BJ (cell line): ENCODE measurements at regions of chr2 and their contacts with region 1.

Region 1: DNA sequence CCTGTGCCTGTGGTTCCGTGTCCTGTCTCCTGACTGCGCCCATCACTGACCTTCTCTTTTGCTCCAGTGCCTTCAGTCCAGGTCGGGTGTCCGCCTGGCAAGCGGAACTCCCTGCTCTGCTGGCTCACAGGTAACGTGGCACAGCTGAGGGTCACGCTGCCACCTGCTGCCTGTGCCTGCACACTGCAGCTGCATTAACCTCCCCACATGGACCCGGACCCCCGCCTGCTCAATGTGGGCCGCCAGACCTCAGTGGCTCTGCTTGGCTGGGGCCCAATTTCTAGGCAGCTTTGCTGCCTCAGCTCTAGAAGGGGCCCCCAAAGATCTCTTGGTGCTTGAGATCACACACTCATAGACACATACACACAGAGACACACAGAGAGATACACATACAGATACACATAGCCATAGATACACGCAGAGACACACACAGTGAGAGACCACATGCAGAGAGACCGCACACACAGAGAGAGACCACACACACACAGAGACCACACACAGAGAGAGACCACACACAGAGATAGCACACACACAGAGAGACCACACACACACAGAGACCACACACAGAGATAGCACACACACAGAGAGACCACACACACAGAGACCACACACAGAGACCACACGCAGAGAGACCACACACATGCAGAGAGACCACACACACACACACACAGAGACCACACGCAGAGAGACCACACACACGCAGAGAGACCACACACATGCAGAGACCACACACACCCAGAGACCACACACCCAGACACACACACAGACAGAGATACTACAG is 14.9 kb upstream of the CNNM3 start:
- DNase-seq: no peak
- H3K4me3 ChIP-seq: no peak overlapping the region
- H3K27me3 ChIP-seq: no peaks in the 10 kb centered on the region
- CTCF ChIP-seq: peak; percentile 86

Region 2: DNA sequence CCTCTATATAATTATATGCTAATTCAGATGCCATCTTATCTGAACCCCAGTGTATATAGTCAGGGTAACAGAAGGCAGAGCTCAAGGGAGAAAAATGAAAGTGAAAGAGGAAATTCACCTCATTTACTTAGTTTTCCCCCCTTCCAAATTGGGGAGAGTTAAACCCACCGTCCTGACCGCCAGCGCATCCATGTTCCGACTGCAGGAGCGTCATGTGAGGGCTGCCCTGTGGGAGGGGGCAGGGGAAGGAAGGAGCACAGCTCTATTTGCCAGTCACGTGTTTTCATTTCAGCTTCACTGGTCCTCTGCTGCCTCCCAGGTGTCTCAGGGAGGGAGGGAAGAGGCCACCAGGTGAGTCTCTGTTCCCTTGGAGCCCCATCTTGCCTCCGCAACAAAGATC is 27.3 kb before region 1 on chr2:
- CTCF ChIA-PET with region 1: interaction called, 10 read pairs
- POLR2A ChIA-PET with region 1: no interaction called
- DNase-seq: no peak
- H3K4me3 ChIP-seq: no peak overlapping the region
- H3K27me3 ChIP-seq: no peaks in the 10 kb centered on the region
- CTCF ChIP-seq: no peak

Region 3: GRCh38 chr2:96783388-96783787 is 17.8 kb before region 1 on chr2:
- CTCF ChIA-PET with region 1: interaction called, 22 read pairs
- POLR2A ChIA-PET with region 1: no interaction called
- DNase-seq: no peak
- H3K4me3 ChIP-seq: no peak overlapping the region
- H3K27me3 ChIP-seq: no peaks in the 10 kb centered on the region
- CTCF ChIP-seq: no peak

Region 4: DNA sequence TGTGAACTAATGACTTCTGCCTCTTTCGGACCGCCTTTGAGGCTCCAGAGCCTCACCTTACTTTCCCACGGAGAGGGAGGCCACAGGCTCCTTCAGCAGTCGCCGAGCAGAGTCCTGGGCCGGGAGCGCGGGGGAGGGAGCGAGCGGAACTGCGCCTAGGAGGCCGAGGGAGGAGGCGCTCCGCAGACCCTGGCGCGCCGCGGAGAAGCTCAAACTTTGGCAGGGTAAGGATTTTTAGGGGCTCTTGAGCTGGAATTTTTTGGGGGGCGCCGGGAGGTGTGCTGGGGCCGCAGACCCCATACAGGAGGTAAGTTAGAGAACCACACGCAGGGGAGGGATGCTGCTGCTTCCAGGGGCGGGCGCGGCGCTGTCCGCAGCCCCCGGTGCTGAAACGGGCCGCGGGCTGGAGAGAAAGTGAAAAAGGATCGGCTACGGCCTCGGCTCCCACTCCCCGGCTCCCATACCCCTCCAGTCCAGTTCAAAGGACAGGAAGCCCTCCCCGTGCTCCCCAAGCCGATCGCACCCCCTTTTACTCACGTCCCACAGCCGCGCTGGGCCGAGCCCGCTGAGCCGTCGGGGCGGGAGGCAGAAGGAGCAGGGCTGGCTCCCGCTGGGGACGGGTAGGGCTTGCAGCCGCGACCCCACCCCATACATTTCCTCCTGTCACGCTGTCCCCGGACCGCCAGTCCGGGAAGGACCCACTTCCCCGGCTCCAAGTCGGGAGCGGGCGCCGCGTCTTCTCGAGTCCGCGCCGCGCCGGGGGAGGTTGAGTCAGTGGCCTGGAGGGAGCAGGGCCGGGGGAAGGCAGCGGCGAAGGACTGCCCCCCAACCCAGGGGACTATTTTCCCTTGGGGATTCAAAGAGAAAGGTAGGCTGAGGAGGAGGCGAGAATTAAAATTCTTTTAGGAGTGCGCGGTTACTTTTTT is 1545.4 kb after region 1 on chr2 and contains the start of gene CNGA3:
- CTCF ChIA-PET with region 1: no interaction called
- POLR2A ChIA-PET with region 1: no interaction called
- DNase-seq: no peak
- H3K4me3 ChIP-seq: no peak within 1 kb of the TSS
- H3K27me3 ChIP-seq: peaks cover 46% of the 10 kb centered on the region
- CTCF ChIP-seq: no peak
- polyA plus RNA-seq, gene CNGA3: not detected in 2 replicates